ENCODE measurements at regions of chr22 and their contacts with region 1.

Region 1: DNA sequence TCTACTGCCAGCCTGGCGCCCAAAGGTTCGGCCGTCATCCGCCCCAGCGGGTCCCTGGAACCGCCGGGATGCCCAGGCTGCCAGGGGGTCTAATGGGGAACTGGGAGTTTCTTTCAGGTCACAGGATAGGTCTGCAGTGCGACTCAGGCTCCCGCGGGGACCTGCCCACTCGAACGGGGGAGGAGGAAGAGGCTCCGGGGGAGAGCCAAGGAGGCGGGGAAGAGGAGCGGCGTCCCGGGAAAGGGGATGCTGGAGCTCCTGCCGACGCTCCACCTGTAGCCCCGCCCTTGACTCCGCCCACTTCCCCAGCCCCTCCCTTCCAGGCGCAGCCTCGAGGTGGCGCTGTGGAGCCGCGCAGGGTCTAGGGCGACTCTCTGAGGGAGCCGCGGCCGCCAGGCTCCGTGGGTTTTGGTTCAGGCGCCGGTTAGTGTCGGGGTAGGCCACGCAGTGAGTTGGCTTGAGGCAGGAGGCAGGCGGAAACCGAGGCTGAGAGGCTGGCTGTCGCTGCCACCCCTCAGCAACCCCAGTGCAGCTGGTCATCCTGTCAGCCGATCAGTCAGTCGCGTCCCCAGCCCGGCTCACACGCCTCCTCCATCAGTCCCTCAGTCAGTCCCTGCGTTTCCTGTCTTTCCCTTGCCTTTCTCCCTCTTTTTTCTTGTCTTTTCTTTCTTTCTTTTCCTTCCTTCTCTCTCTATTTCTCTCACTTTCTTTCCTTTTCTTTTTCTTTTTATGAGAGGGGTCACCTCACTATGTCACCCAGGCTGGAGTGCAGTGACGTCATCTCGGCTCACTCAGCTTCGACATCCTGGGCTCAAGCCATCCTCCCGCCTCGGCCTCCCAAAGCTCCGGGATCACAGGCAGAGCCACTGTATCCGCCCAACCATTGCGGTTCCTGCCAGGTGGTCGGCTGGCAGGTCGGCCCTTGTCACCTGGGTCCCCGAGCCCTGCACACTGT is 26.4 kb downstream of the YWHAH start:
- DNase-seq: peak in 1 of 2 donors; percentile 90
- H3K4me3 ChIP-seq: peak overlapping the region; percentile 51 to 57
- H3K27ac ChIP-seq: peak overlapping the region; percentile 8 to 16
- H3K4me1 ChIP-seq: peaks cover 4 to 9% of the 10 kb centered on the region in 2 donors
- H3K27me3 ChIP-seq: no peaks in the 10 kb centered on the region
- CTCF ChIP-seq: peak; percentile 82 to 94 (median 94)

Region 2: GRCh38 chr22:31872209-31872608 is 98.6 kb before region 1 on chr22:
- intact Hi-C with region 1: loop called (anchors 5 kb)
- DNase-seq: no peak
- H3K4me3 ChIP-seq: no peak overlapping the region
- H3K27ac ChIP-seq: no peak overlapping the region
- H3K4me1 ChIP-seq: no peaks in the 10 kb centered on the region
- H3K27me3 ChIP-seq: no peaks in the 10 kb centered on the region
- CTCF ChIP-seq: no peak

Region 3: DNA sequence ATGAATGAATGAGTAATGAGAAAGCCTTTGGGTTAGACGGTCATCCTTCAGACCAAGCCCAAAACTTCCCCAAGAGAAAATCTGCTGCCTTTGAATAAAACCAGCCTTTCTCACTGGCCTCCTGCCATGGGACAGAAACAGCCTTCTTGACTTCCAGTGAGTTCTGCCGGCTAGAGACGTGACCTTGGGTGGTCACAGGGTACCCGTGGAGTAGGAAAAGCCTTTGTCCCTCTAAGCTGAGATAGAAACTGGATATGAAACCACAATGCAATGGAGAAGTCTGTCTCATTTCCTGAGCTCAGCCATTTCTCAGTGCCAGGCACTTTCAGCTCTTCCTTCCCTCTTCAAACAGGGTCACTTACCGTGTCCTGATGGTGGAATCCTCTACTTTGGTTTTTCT is 47.6 kb before region 1 on chr22:
- intact Hi-C with region 1: loop called (anchors 5 kb)
- DNase-seq: no peak
- H3K4me3 ChIP-seq: no peak overlapping the region
- H3K27ac ChIP-seq: no peak overlapping the region
- H3K4me1 ChIP-seq: no peaks in the 10 kb centered on the region
- H3K27me3 ChIP-seq: no peaks in the 10 kb centered on the region
- CTCF ChIP-seq: no peak

Region 4: DNA sequence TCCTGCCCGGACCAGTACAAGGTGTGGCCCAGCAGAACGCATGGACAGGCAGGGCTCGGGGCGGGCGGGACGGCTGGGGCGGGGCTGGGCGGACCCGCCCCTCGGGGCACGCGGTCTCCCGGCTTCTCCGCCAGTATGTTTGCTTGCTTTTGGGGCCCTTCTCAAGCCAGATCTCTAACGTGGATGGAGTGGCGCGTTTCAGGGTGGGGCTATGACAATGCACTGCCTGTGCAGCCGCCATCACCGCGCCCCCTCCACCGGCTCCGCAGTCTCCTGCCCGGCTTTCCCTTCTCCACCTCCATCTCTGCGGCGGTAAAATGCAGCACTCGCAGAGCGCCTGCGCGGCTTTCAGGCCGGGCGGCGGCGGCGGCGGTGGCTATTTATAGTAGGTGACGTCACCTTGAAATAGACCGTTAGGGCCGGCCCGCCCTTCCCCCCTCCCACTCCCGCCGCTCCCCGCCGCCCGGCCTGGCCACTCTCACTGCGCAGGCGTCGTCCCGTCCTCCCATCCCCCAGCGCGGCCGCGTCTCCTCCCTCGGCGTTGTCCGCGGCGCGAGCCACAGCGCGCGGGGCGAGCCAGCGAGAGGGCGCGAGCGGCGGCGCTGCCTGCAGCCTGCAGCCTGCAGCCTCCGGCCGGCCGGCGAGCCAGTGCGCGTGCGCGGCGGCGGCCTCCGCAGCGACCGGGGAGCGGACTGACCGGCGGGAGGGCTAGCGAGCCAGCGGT is 26.6 kb before region 1 on chr22 and contains the start of gene YWHAH:
- intact Hi-C with region 1: loop called (anchors 1 kb)
- DNase-seq: peak; percentile 70 to 96
- H3K4me3 ChIP-seq: peak within 1 kb of the TSS; percentile 83 to 98
- H3K27ac ChIP-seq: peak within 1 kb of the TSS; percentile 95 to 99
- H3K4me1 ChIP-seq: peaks cover 0 to 3% of the 10 kb centered on the region in 2 donors
- H3K27me3 ChIP-seq: no peaks in the 10 kb centered on the region
- CTCF ChIP-seq: peak in 1 of 3 experiments; percentile 22
- total RNA-seq, gene YWHAH: 139 TPM

Region 5: DNA sequence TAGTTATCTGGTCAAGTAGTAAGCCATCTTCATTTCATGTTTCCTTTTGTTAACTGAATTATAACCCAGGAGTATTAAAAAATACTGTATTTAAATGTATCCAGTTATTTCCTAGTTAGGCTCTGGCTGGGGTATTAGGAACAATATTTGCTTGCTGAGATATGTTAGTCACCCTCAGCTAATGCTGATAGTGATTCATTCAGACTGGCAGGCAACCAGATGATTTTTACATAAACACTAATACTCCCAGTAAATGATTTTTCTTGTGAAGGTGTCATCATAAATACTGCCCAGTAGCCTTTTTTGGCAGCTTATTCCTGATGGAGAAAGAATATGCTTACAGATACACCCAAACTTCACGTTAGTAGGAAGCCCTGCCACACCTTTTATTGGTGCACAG is 18.3 kb before region 1 on chr22:
- intact Hi-C with region 1: loop called (anchors 2 kb)
- DNase-seq: no peak
- H3K4me3 ChIP-seq: no peak overlapping the region
- H3K27ac ChIP-seq: peak overlapping the region; percentile 80 to 84
- H3K4me1 ChIP-seq: peaks cover 17 to 47% of the 10 kb centered on the region in 2 donors
- H3K27me3 ChIP-seq: no peaks in the 10 kb centered on the region
- CTCF ChIP-seq: no peak

Measured in ascending aorta (tissue), 2 donors.